Upper lobe of right lung (tissue), 1 donor: ENCODE measurements at regions of chr16 and their contacts with region 1.

Region 1: DNA sequence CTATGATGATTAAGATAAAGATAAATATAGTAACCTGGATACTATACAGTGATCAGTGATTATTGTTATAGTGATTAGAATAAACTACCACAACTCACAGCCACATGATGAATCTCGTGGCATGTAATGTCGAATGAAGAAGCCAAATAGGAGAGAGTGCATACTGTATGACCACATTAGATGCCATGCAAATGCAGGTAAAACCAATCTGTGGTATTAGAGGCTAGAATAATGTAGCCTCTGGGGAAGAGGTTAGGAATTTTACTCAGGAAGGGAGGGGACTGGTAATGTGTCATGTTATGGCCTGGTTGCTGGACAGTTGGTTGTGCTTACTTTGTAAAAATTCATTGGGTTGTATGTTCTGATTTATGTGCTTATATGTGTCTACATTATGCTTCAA is 402.7 kb downstream of the CDH13 start:
- DNase-seq: no peak
- ATAC-seq: no peak
- H3K4me3 ChIP-seq: no peak overlapping the region
- H3K27ac ChIP-seq: no peak overlapping the region
- H3K4me1 ChIP-seq: no peaks in the 10 kb centered on the region
- H3K27me3 ChIP-seq: no peaks in the 10 kb centered on the region
- CTCF ChIP-seq: no peak

Region 2: GRCh38 chr16:82979406-82980111 is 49.9 kb before region 1 on chr16:
- intact Hi-C with region 1: loop called (anchors 5 kb)
- DNase-seq: no peak
- ATAC-seq: no peak
- H3K4me3 ChIP-seq: no peak overlapping the region
- H3K27ac ChIP-seq: no peak overlapping the region
- H3K4me1 ChIP-seq: no peaks in the 10 kb centered on the region
- H3K27me3 ChIP-seq: no peaks in the 10 kb centered on the region
- CTCF ChIP-seq: no peak